ENCODE measurements at regions of chr9 and their contacts with region 1.

Region 1: DNA sequence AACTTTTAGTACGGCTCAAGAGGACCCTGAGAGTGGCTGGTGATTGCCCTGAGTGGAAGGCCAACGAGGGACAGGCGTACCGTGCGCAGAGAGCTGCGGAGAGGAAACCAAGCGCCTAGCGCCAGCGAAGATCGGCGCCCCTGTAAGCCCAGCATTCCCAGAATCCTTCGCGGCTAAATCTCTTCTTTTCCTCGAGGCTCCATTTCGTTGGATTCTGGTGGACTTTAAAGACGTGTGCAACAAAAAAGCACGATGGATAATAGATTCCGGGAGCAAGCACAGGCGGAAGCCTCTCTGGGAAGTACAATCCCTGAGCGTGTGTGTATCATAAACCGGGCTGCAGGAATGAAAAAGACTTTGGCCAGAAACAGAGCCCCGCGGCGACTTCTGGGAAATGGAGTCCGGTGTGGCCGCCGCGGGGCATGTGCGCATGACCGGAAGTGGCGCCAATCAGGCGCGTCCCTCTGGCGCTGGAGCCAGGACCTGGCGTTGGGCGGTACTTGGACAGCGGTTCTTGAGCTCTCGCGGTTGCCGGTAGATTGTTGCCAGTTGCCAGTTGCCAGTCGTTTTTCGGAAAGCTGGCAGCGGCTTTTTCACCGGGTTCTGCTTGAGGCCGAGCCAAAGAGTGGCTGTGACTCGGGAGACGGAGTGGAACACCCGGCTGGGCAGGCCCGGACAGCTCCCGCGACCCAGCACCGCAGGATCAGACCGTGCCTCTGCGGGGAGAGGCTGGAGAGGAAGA is at the start of gene ZNF79:
- DNase-seq: peak; percentile 94
- H3K4me3 Mint-ChIP-seq: peak within 1 kb of the TSS; percentile 98
- H3K27ac Mint-ChIP-seq: peak within 1 kb of the TSS; percentile 95
- H3K4me1 Mint-ChIP-seq: peaks cover 49% of the 10 kb centered on the region
- H3K27me3 Mint-ChIP-seq: no peaks in the 10 kb centered on the region
- total RNA-seq, gene ZNF79: 7.9 to 8.1 TPM

Region 2: DNA sequence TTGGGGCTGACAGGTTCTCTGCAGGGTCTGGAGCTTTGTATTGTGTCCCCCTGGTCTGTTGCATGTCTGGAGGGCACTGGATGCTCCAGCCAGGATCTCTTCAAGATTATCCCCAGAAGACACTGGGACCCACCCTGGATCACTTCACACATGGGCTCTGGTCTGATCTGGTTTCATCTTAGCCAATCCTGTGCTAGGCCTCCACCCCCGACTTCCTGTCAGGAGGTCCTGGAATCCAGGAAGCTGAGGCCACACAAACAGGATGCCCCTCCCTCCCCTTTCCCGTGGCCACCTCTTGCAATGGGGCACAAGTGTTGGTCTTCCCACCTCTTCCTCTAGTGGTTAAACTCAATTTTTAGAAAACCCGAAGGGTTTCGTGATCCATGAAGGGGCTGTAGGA is 1340.1 kb before region 1 on chr9:
- CTCF ChIA-PET with region 1: no interaction called
- intact Hi-C with region 1: no loop called
- DNase-seq: no peak
- H3K4me3 Mint-ChIP-seq: no peak overlapping the region
- H3K27ac Mint-ChIP-seq: no peak overlapping the region
- H3K4me1 Mint-ChIP-seq: peaks cover 11% of the 10 kb centered on the region
- H3K27me3 Mint-ChIP-seq: peaks cover 5% of the 10 kb centered on the region

Region 3: GRCh38 chr9:126914458-126915280 is 509.4 kb before region 1 on chr9 and contains the start of gene RALGPS1:
- CTCF ChIA-PET with region 1: no interaction called
- intact Hi-C with region 1: loop called (anchors 1 kb)
- DNase-seq: peak; percentile 93
- H3K4me3 Mint-ChIP-seq: peak within 1 kb of the TSS; percentile 71
- H3K27ac Mint-ChIP-seq: no peak within 1 kb of the TSS
- H3K4me1 Mint-ChIP-seq: peaks cover 8% of the 10 kb centered on the region
- H3K27me3 Mint-ChIP-seq: peaks cover 2% of the 10 kb centered on the region
- total RNA-seq, gene RALGPS1: 2.1 to 2.4 TPM

Region 4: DNA sequence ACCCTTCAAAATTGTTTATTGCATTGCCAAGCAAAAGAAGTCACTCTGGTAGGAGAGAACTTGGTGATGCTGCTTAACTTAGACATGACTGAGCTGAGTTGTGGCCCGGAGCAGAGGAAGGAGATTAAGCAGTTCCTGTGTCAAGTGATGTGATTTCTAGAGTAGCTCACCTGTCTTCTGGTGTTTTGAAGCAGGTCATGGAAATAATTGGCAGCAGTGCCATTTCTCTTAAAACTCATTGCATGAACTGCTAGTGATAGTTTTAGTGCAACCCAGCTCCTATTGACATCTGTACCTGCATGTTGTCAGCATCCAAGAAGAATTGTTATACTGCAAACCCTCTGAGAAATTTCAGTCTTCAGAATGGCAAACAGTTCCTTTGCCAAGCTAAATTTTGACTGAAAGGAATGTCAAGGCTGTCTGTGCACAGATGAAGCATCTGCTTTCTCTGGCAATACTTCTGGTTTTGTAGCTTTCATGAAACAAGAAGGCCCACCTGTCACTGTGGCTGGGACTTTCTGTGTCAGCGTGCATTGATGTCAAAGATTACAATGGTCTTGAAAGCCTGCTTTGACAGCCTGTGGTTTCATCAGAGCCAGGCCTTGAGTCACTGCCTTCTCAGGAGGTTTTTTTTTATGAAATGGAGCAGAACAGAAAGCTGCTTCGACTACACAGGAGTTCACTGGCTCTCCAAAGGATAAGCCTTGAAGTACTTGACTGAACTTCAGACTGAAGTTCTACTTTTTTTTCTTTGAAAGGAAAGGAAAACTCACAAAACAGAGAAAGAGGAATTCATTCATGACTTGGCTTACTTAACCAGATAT is 418.9 kb before region 1 on chr9:
- CTCF ChIA-PET with region 1: no interaction called
- intact Hi-C with region 1: loop called (anchors 1 kb)
- DNase-seq: peak; percentile 91
- H3K4me3 Mint-ChIP-seq: no peak overlapping the region
- H3K27ac Mint-ChIP-seq: peak overlapping the region; percentile 76
- H3K4me1 Mint-ChIP-seq: peaks cover 21% of the 10 kb centered on the region
- H3K27me3 Mint-ChIP-seq: peaks cover 34% of the 10 kb centered on the region

Region 5: DNA sequence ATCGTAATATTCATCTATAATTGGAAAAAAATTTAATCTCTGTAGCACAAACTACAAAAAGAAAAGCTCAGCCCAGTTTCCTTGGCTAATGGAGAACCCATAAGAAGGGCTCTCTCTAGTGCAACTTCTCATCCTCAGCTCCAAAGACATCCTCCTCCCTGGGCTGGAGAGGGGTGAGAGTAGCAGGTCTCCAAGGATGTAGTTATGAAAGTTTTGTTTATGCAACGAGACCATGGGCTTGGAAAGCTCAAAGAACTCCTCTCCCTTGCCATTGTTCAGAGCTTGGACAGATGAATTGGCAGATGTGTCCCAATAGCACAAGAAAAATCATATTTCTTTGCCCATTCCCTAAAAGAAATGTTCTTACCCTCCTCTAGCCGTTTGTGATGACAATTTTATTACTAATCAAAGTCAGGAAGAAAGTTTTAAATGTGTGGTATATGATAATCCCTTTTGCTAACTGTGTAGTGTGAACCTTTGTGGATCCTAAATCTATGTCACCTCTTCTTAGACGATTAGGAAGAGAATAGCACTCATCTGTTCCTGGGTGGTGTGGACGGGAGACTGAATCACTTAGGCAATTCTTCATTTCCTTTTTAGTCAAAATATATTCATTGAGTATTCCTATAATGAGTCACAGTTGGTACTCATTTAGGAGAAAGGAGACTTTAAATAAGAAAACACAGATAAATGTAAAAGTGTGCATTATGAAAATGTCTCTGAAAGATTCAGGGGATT is 107.3 kb before region 1 on chr9:
- CTCF ChIA-PET with region 1: no interaction called
- intact Hi-C with region 1: loop called (anchors 1 kb)
- DNase-seq: peak; percentile 55
- H3K4me3 Mint-ChIP-seq: no peak overlapping the region
- H3K27ac Mint-ChIP-seq: no peak overlapping the region
- H3K4me1 Mint-ChIP-seq: peaks cover 18% of the 10 kb centered on the region
- H3K27me3 Mint-ChIP-seq: peaks cover 14% of the 10 kb centered on the region

Region 6: DNA sequence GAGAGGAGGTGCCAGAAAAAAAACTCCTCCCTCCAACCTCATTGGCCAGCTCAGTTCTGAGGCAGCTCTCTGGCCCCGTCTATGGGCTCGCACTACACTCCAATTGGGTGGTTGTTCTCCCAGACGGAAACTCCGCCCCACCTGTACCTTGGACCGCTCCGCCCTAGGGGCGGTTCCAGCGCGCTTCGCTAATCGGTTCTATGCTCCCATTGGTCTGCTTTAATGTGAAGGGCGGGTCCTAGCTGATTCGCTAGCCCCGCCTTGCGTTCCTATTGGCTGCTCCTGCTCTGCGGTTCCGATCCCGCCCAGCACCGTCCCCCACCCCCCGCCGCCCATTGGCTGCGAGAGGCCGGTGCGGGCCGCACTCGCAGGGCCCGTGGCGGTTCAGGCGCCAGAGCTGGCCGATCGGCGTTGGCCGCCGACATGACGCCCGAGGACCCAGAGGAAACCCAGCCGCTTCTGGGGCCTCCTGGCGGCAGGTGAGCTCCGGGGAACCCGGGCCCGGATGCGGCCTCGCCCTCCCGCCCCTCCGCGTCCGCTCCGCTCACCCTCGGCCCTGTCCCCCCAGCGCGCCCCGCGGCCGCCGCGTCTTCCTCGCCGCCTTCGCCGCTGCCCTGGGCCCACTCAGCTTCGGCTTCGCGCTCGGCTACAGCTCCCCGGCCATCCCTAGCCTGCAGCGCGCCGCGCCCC is 27.2 kb before region 1 on chr9 and contains the start of gene SLC2A8:
- CTCF ChIA-PET with region 1: interaction called, 3 read pairs
- intact Hi-C with region 1: loop called (anchors 2 kb)
- DNase-seq: peak; percentile 92
- H3K4me3 Mint-ChIP-seq: peak within 1 kb of the TSS; percentile 61
- H3K27ac Mint-ChIP-seq: no peak within 1 kb of the TSS
- H3K4me1 Mint-ChIP-seq: peaks cover 9% of the 10 kb centered on the region
- H3K27me3 Mint-ChIP-seq: peaks cover 74% of the 10 kb centered on the region
- total RNA-seq, gene SLC2A8: 3.4 TPM

Region 7: DNA sequence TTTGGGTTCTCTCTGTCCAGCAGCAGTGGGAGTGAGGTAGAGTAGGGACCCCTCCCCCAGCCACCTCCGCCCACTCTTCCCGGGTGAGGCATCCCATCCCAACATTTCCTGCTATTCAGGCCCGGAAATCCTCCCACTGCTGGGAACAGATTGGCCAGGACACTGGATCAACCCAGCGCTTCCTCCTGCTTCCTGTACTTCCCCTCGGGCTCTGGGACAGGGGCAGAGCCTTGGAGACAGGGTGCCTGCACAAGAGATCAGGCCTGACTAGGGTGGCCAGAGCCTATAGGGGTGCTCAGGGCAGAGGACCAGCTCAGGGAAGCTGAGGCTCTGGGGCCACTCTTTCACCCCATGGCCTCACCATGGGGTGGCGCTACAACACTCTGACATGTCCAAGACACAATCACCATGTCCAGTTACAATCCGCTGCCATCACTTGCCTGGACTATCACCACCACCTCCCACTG is 339.8 kb after region 1 on chr9:
- CTCF ChIA-PET with region 1: no interaction called
- intact Hi-C with region 1: no loop called
- DNase-seq: peak; percentile 53
- H3K4me3 Mint-ChIP-seq: no peak overlapping the region
- H3K27ac Mint-ChIP-seq: peak overlapping the region; percentile 28
- H3K4me1 Mint-ChIP-seq: peaks cover 44% of the 10 kb centered on the region
- H3K27me3 Mint-ChIP-seq: no peaks in the 10 kb centered on the region

Region 8: DNA sequence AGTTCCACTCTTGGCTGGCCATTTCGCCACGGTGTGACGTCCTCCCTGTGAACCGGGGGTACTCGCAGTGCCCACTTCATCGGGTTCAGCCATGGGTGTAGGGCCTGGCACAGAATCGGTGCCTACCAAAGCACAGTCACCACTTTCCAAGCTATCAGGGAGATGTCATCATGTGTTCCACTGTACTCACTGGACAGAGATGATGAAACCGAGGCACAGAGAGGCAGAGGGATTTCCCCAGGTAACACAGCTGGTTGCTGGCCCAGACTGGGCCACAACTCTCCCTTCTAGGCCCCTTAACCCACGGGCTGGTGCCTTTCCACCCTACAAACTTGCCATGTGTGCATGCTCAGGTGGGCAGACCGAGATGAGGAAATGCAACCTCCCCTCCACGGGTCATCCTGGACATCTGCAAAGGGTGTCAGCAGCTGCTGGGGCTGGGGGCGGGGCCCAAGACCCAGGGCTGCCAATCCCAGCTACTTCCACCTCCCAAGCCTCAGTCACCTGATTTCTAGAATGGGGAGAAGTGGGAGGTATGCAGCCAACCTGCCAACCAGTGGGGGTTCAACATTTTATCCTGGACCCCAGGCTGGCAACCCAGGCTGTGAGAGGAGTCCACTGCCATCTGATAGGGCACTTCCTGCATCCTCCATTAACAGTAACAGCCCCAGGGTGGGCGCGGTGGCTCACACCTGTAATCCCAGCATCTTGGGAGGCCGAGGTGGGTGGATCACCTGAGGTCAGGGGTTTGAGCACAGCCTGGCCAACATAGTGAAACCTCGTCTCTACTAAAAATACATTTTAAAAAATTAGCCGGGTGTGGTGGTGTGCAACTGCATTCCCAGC is 355.3 kb after region 1 on chr9:
- CTCF ChIA-PET with region 1: no interaction called
- intact Hi-C with region 1: loop called (anchors 2 kb)
- DNase-seq: peak; percentile 87
- H3K4me3 Mint-ChIP-seq: peak overlapping the region; percentile 96
- H3K27ac Mint-ChIP-seq: peak overlapping the region; percentile 96
- H3K4me1 Mint-ChIP-seq: peaks cover 65% of the 10 kb centered on the region
- H3K27me3 Mint-ChIP-seq: no peaks in the 10 kb centered on the region

Measured in activated naive CD4-positive, alpha-beta T cell treated with anti-CD3 and anti-CD28 coated beads for 36 hours (primary cell).